IMR-90 (cell line): ENCODE measurements at regions of chrX and their contacts with region 1.

Region 1: GRCh38 chrX:29090811-29091210 is 503.6 kb downstream of the IL1RAPL1 start:
- DNase-seq: peak; percentile 29
- ATAC-seq: no peak
- H3K4me3 ChIP-seq: no peak overlapping the region
- H3K27ac ChIP-seq: no peak overlapping the region
- H3K4me1 ChIP-seq: no peaks in the 10 kb centered on the region
- H3K27me3 ChIP-seq: no peaks in the 10 kb centered on the region
- CTCF ChIP-seq: peak; percentile 45
- POLR2A ChIP-seq: no peak
- RAD21 ChIP-seq: peak; percentile 55

Region 2: DNA sequence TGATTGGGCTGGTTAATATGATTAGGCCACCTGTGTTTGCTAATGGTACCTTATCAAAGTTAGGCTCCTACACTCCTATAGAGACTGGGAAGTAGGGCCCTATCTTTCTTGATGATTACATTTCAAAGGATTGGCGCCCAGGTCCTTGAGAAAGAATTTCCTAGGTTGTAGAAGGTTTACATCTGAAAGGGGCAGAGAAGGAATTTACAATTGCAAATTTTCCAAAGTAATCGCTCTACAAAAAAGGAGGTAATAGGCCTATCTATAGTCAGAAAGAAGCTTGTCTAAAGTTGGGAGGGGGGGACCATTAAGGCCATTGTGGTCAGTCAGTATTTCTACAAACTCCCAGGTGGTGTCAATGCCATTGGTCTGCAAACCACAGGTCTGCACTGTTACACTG is 134.9 kb after region 1 on chrX:
- CTCF ChIA-PET with region 1: no interaction called
- POLR2A ChIA-PET with region 1: no interaction called
- dilution Hi-C with region 1: no loop called
- in situ Hi-C with region 1: no loop called
- intact Hi-C with region 1: no loop called
- DNase-seq: no peak
- ATAC-seq: no peak
- H3K4me3 ChIP-seq: no peak overlapping the region
- H3K27ac ChIP-seq: no peak overlapping the region
- H3K4me1 ChIP-seq: no peaks in the 10 kb centered on the region
- H3K27me3 ChIP-seq: no peaks in the 10 kb centered on the region
- CTCF ChIP-seq: no peak
- POLR2A ChIP-seq: no peak
- RAD21 ChIP-seq: no peak

Region 3: DNA sequence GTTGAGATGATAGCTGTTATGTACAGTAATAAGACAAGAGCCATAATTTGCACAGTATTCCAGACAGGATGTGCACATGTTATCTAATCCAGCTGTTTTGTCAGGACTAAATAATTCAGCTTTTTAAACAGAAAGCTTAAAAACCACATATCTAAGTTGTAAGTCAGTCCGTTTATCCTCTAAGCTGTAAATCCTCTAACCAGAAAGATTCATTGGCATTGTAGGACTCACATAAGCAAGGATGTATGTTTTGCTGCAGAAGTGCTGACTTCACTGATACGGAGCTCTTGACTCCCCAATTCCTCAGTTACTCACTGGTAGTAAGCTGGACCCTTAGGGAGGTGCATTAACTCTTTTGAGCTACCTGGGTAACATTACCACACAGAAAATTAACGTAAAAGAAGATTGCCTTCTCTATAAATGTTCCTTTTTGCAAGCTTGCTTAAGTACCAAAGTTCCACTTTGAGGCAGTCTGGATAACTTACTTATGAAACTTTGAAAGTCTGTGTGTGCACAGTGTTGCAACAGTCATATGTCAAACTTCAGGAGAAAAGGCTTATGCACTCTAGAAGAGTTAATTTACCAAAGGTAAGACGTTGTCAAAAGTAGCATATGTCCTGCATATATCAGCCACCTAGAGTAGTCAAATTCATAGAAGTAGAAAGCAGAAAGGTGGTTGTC is 1066.2 kb after region 1 on chrX:
- CTCF ChIA-PET with region 1: no interaction called
- POLR2A ChIA-PET with region 1: interaction called, 14 read pairs
- dilution Hi-C with region 1: no loop called
- in situ Hi-C with region 1: no loop called
- intact Hi-C with region 1: no loop called
- DNase-seq: peak; percentile 45
- ATAC-seq: peak; percentile 65
- H3K4me3 ChIP-seq: no peak overlapping the region
- H3K27ac ChIP-seq: no peak overlapping the region
- H3K4me1 ChIP-seq: no peaks in the 10 kb centered on the region
- H3K27me3 ChIP-seq: no peaks in the 10 kb centered on the region; the same call in 1 of the 2 replicates
- CTCF ChIP-seq: no peak
- POLR2A ChIP-seq: no peak
- RAD21 ChIP-seq: no peak